ENCODE measurements at regions of chr3 and their contacts with region 1.

Region 1: GRCh38 chr3:27022096-27022761 is 347.0 kb downstream of the NEK10 start:
- DNase-seq: peak; percentile 18
- ATAC-seq: peak; percentile 96
- H3K4me3 Mint-ChIP-seq: no peak overlapping the region
- H3K27ac Mint-ChIP-seq: no peak overlapping the region
- H3K4me1 Mint-ChIP-seq: peaks cover 39% of the 10 kb centered on the region
- H3K27me3 Mint-ChIP-seq: no peaks in the 10 kb centered on the region
- CTCF ChIP-seq: peak; percentile 14; the same call in 1 of the 2 replicates

Region 2: DNA sequence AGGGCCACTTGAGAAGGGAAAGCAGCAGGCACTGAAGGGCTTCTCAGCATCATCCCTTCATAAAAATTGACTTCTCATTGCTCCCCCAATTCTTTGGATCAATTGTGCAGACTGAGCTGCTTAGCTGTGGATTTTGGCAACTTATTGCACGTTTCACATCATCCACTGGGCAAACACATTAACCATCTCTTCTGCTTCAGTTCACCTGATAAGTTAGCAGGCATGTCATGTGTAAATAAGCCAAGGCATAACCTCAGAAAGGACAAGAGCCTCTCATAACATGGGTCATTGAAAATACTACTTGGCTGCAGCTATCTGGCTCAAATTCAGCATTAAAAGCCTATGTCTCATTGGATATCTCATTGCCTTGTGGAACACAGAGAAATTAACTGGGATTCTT is 33.2 kb before region 1 on chr3:
- CTCF ChIA-PET with region 1: no interaction called
- POLR2A ChIA-PET with region 1: no interaction called
- DNase-seq: no peak
- ATAC-seq: no peak
- H3K4me3 Mint-ChIP-seq: no peak overlapping the region
- H3K27ac Mint-ChIP-seq: no peak overlapping the region
- H3K4me1 Mint-ChIP-seq: peaks cover 8% of the 10 kb centered on the region
- H3K27me3 Mint-ChIP-seq: no peaks in the 10 kb centered on the region
- CTCF ChIP-seq: no peak

Region 3: DNA sequence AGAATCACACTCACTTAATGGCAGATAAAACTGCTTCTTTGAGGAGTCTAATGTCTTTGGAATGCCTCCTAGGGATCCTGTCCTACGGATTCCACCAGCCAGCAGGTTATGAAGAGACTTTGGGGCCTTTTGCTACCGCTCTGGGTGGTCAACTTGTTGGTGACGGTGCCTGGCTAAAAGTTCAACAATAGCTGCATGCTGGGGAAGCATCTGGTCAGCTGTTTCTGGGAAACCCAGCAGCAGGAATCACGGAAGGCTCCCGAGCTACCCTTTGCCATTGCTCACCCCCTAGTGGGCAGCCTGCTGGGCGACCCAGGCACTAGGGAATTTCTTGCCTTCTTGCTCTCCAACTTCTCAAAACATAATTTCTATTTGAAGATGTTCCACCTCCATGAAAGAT is 83.7 kb after region 1 on chr3:
- CTCF ChIA-PET with region 1: interaction called, 13 read pairs
- POLR2A ChIA-PET with region 1: no interaction called
- DNase-seq: peak; percentile 50
- ATAC-seq: peak; percentile 77
- H3K4me3 Mint-ChIP-seq: no peak overlapping the region
- H3K27ac Mint-ChIP-seq: peak overlapping the region; percentile 31
- H3K4me1 Mint-ChIP-seq: peaks cover 52% of the 10 kb centered on the region
- H3K27me3 Mint-ChIP-seq: no peaks in the 10 kb centered on the region
- CTCF ChIP-seq: no peak